ENCODE measurements at regions of chr2 and their contacts with region 1.

Region 1: GRCh38 chr2:191701696-191702095 is 23.8 kb downstream of the NABP1 start:
- DNase-seq: no peak
- ATAC-seq: no peak
- H3K4me3 ChIP-seq: no peak overlapping the region
- H3K27ac ChIP-seq: no peak overlapping the region
- H3K4me1 ChIP-seq: no peaks in the 10 kb centered on the region
- H3K27me3 ChIP-seq: no peaks in the 10 kb centered on the region
- CTCF ChIP-seq: no peak
- POLR2A ChIP-seq: no peak
- RAD21 ChIP-seq: no peak

Region 2: GRCh38 chr2:191666732-191667131 is 35.0 kb before region 1 on chr2:
- CTCF ChIA-PET with region 1: no interaction called
- POLR2A ChIA-PET with region 1: no interaction called
- dilution Hi-C with region 1: no loop called
- in situ Hi-C with region 1: no loop called
- intact Hi-C with region 1: no loop called
- DNase-seq: peak; percentile 85
- ATAC-seq: peak; percentile 62
- H3K4me3 ChIP-seq: no peak overlapping the region
- H3K27ac ChIP-seq: no peak overlapping the region
- H3K4me1 ChIP-seq: peaks cover 2% of the 10 kb centered on the region; the same call in 1 of the 2 replicates
- H3K27me3 ChIP-seq: no peaks in the 10 kb centered on the region
- CTCF ChIP-seq: no peak
- POLR2A ChIP-seq: no peak
- RAD21 ChIP-seq: no peak

Region 3: DNA sequence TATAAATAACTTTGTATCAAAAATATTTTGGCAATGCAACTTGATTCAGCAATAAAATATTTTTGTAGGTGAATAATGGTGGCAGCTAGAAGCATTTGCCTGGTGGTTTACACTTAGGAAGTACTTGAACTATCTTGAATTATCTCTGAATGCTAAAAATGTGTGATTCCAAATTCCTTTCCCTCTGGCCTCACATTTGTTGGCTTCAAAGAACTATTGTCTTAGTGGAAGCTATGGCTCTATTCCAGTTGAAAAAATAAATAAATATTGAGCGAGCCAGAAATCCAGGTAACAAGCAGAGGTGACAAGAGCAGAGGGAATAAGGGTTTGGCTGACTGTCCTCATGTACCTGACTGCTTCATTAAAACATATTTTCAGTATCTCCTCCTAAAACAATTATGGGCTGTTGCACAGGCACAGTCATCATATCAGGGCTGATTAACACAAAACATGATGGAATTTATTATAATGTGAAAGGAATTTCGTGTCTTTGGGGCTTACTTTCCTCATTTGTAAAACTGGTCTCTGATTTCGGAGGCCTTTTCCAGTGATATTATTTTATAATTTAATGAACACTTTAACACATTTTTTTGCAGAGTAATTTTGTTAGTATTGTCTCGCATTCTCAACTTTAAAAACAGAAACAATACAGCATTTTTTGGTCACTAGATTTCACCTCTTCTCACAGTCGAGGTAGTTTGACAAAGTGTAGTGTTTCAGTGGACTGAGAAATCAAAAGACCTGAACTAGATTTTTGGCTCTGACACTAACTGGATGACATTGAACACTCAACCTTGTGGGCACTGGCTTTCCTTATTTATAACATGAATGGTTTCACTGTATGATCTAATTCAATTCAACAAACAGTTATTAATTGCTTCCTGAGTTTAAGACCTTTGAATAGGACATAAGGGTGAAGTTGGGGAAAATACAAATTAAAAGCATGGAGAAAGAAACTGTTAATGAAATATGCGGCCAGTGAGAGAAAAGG is 153.0 kb after region 1 on chr2:
- CTCF ChIA-PET with region 1: no interaction called
- POLR2A ChIA-PET with region 1: no interaction called
- dilution Hi-C with region 1: no loop called
- in situ Hi-C with region 1: no loop called
- intact Hi-C with region 1: no loop called
- DNase-seq: no peak
- ATAC-seq: no peak
- H3K4me3 ChIP-seq: no peak overlapping the region
- H3K27ac ChIP-seq: no peak overlapping the region
- H3K4me1 ChIP-seq: peaks cover 2% of the 10 kb centered on the region; the same call in 1 of the 2 replicates
- H3K27me3 ChIP-seq: no peaks in the 10 kb centered on the region
- CTCF ChIP-seq: no peak
- POLR2A ChIP-seq: no peak
- RAD21 ChIP-seq: no peak

Region 4: GRCh38 chr2:191869178-191869577 is 167.5 kb after region 1 on chr2:
- CTCF ChIA-PET with region 1: no interaction called
- POLR2A ChIA-PET with region 1: no interaction called
- dilution Hi-C with region 1: no loop called
- in situ Hi-C with region 1: no loop called
- intact Hi-C with region 1: loop called (anchors 10 kb)
- DNase-seq: peak; percentile 30
- ATAC-seq: no peak
- H3K4me3 ChIP-seq: no peak overlapping the region
- H3K27ac ChIP-seq: no peak overlapping the region
- H3K4me1 ChIP-seq: peaks cover 22% of the 10 kb centered on the region
- H3K27me3 ChIP-seq: no peaks in the 10 kb centered on the region
- CTCF ChIP-seq: peak; percentile 41
- POLR2A ChIP-seq: no peak
- RAD21 ChIP-seq: peak; percentile 50

Region 5: DNA sequence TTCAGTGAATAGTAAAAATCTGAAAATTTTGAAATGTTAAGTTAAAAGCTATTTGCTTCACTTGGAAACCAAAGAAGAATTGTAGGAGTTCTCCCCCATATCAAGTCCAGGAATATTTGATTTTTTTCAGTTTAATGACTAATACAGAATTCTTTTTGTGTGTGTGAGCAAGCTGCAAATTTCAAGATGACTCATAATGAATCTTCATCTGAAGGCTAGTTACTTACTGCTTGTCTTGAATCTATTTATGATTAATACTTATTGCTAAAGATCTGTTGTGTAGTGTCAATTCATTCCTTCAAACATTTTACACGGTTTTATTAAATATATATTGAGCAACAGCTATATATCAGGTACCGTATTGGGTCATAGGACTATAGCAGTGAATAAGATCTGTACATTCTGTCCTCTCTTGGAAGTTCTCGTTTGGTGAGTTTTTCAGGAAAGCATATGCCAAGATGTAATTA is 193.0 kb after region 1 on chr2:
- CTCF ChIA-PET with region 1: no interaction called
- POLR2A ChIA-PET with region 1: interaction called, 10 read pairs
- dilution Hi-C with region 1: no loop called
- in situ Hi-C with region 1: no loop called
- intact Hi-C with region 1: no loop called
- DNase-seq: peak; percentile 86
- ATAC-seq: peak; percentile 74
- H3K4me3 ChIP-seq: no peak overlapping the region
- H3K27ac ChIP-seq: peak overlapping the region; percentile 44
- H3K4me1 ChIP-seq: peaks cover 10% of the 10 kb centered on the region
- H3K27me3 ChIP-seq: no peaks in the 10 kb centered on the region
- CTCF ChIP-seq: no peak
- POLR2A ChIP-seq: no peak
- RAD21 ChIP-seq: no peak

Region 6: GRCh38 chr2:192236136-192236535 is 534.4 kb after region 1 on chr2:
- CTCF ChIA-PET with region 1: no interaction called
- POLR2A ChIA-PET with region 1: no interaction called
- dilution Hi-C with region 1: no loop called
- in situ Hi-C with region 1: no loop called
- intact Hi-C with region 1: no loop called
- DNase-seq: peak; percentile 73
- ATAC-seq: peak; percentile 40
- H3K4me3 ChIP-seq: no peak overlapping the region
- H3K27ac ChIP-seq: no peak overlapping the region
- H3K4me1 ChIP-seq: no peaks in the 10 kb centered on the region
- H3K27me3 ChIP-seq: no peaks in the 10 kb centered on the region
- CTCF ChIP-seq: no peak
- POLR2A ChIP-seq: no peak
- RAD21 ChIP-seq: no peak